ENCODE measurements at regions of chr3 and their contacts with region 1.

Region 1: DNA sequence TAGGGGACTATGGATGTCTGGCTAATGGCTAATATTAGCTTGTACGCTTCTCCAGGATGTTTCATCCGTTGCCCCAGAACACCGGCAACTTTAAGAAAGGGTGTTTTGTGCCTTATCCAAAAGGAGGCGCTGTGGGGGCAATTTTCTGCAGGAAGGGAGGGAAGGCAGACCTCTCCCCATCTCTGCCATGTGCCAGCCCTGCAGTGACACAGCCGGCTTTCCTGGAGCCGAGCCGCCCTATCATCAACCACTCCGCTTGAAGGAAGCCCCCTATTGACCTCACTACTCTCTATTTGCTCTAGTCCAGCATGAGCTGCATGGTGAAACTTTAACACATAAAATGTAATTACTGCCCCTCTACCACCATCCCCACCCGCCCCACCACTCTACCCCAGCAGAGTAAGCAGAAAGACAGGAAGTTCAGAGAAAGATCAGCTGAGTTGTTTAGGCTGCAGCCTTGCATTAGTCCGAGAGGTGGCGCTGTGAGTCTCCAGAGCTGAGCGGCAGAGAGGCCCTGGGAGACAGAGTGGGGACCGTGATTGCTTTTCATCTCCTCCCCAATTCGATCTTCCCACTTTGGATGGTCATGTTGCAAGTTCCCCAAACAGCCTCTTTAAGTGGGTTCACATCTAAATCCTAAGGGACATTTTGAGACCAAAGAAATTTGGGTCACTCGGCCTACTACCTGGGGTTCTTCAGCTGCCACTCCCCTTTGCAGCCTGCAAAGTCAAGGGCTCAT is 24.5 kb upstream of the RAD18 start:
- DNase-seq: peak; percentile 79
- ATAC-seq: peak; percentile 84
- H3K4me3 Mint-ChIP-seq: no peak overlapping the region
- H3K27ac Mint-ChIP-seq: no peak overlapping the region
- H3K4me1 Mint-ChIP-seq: peaks cover 6% of the 10 kb centered on the region
- H3K27me3 Mint-ChIP-seq: no peaks in the 10 kb centered on the region

Region 2: DNA sequence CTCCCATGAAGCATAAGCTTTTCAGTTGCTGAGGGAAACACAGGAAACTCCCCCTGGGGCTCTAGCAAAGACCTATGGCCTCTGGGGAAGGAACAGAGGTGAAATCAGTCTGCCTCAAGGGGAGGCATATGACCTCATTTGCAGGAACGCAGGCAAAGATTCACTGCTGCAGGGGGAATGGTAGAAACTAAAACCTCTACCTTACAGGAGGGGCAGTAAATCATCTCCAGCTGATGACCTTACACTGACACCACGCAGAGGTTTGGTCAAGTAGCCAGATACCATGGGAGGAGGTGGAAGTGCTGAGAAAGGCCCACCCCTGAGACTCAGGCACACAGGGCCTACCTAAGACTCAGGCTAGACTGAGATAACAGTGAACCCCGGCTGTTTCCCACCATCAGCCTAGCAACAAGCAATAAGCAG is 105.6 kb before region 1 on chr3:
- CTCF ChIA-PET with region 1: no interaction called
- POLR2A ChIA-PET with region 1: no interaction called
- DNase-seq: no peak
- ATAC-seq: no peak
- H3K4me3 Mint-ChIP-seq: no peak overlapping the region
- H3K27ac Mint-ChIP-seq: peak overlapping the region; percentile 10
- H3K4me1 Mint-ChIP-seq: no peaks in the 10 kb centered on the region
- H3K27me3 Mint-ChIP-seq: no peaks in the 10 kb centered on the region

Region 3: GRCh38 chr3:8970971-8971589 is 16.7 kb before region 1 on chr3:
- CTCF ChIA-PET with region 1: interaction called, 32 read pairs
- POLR2A ChIA-PET with region 1: no interaction called
- DNase-seq: peak; percentile 79
- ATAC-seq: peak; percentile 74
- H3K4me3 Mint-ChIP-seq: no peak overlapping the region
- H3K27ac Mint-ChIP-seq: no peak overlapping the region
- H3K4me1 Mint-ChIP-seq: peaks cover 3% of the 10 kb centered on the region
- H3K27me3 Mint-ChIP-seq: peaks cover 10% of the 10 kb centered on the region

Region 4: DNA sequence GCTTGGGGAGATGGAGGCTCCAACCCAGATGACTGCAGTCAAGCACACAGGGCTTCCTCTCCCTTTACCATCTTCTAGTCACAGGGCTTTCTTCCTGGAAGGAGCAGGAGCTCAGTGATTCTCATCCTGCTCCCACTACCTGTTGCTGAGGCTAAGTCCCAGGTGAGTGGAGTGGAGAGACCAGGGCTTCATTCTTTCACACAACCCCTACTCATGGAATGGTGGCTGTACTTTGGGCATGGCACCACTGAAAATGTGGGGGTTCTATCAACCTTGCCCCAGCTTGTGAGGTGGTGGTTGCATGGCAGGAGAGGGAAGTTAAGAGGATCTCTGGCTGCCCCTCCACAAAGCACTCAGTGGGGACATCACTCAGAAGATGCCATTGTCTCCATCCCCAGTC is 12.2 kb after region 1 on chr3:
- CTCF ChIA-PET with region 1: interaction called, 15 read pairs
- POLR2A ChIA-PET with region 1: no interaction called
- DNase-seq: no peak
- ATAC-seq: no peak
- H3K4me3 Mint-ChIP-seq: no peak overlapping the region
- H3K27ac Mint-ChIP-seq: no peak overlapping the region
- H3K4me1 Mint-ChIP-seq: no peaks in the 10 kb centered on the region
- H3K27me3 Mint-ChIP-seq: peaks cover 4% of the 10 kb centered on the region

Region 5: GRCh38 chr3:9013782-9014563 is 26.2 kb after region 1 on chr3:
- CTCF ChIA-PET with region 1: interaction called, 14 read pairs
- POLR2A ChIA-PET with region 1: no interaction called
- DNase-seq: no peak
- ATAC-seq: no peak
- H3K4me3 Mint-ChIP-seq: no peak overlapping the region
- H3K27ac Mint-ChIP-seq: no peak overlapping the region
- H3K4me1 Mint-ChIP-seq: peaks cover 16% of the 10 kb centered on the region
- H3K27me3 Mint-ChIP-seq: no peaks in the 10 kb centered on the region

Measured in activated CD8-positive, alpha-beta T cell treated with anti-CD3 and anti-CD28 coated beads, Interleukin-2, amount 10 ng/mL, durations not matched to agents 7 days and 5 days (primary cell).